Astrocyte of the cerebellum (primary cell): ENCODE measurements at regions of chr17 and their contacts with region 1.

Region 1: GRCh38 chr17:40303009-40303657 is 5.8 kb upstream of the RARA start:
- DNase-seq: peak; percentile 65
- H3K4me3 ChIP-seq: no peak overlapping the region
- CTCF ChIP-seq: peak; percentile 76

Region 2: DNA sequence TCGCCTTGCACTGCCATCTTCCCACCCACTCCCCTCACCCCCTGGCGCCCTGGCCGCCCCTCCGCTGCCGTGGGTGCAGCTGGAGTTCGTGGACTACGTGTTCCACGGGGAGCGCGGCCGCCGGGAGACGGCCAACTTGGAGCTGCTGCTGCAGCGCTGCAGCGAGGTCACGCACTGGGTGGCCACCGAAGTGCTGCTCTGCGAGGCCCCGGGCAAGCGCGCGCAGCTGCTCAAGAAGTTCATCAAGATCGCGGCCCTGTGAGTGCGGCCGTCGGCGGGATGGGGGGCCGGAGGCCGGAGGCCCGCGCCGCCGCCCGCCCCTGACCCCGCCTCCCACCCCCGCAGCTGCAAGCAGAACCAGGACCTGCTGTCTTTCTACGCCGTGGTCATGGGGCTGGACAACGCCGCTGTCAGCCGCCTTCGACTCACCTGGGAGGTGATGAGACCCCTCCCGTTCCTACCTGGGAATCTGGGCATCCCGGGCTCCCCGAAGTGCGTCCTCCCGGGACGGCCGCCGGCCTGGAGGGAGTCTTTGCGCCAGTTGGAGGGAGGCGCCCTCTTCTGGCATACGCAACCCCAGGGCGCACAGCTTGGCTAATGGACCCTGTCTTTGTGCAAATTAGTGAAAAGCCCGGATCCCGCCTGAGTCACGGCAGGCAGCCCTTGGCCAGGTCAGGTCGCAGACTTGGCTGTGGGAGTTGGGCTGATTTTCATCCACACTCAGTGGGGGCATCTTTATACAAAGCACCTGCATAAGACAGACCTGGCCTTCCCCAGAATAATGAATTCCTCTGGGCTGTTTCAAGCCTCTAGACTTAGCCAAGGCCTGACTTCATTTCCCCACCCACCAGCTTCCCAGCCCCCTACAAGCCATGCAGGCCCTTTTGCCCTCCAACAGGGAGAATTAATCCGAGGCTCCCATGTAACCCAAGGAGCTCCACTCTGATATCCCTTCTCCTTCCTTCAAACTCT is 111.6 kb before region 1 on chr17:
- in situ Hi-C with region 1: loop called (anchors 5 kb)
- DNase-seq: peak; percentile 42
- H3K4me3 ChIP-seq: peak overlapping the region; percentile 39
- CTCF ChIP-seq: peak; percentile 79

Region 3: DNA sequence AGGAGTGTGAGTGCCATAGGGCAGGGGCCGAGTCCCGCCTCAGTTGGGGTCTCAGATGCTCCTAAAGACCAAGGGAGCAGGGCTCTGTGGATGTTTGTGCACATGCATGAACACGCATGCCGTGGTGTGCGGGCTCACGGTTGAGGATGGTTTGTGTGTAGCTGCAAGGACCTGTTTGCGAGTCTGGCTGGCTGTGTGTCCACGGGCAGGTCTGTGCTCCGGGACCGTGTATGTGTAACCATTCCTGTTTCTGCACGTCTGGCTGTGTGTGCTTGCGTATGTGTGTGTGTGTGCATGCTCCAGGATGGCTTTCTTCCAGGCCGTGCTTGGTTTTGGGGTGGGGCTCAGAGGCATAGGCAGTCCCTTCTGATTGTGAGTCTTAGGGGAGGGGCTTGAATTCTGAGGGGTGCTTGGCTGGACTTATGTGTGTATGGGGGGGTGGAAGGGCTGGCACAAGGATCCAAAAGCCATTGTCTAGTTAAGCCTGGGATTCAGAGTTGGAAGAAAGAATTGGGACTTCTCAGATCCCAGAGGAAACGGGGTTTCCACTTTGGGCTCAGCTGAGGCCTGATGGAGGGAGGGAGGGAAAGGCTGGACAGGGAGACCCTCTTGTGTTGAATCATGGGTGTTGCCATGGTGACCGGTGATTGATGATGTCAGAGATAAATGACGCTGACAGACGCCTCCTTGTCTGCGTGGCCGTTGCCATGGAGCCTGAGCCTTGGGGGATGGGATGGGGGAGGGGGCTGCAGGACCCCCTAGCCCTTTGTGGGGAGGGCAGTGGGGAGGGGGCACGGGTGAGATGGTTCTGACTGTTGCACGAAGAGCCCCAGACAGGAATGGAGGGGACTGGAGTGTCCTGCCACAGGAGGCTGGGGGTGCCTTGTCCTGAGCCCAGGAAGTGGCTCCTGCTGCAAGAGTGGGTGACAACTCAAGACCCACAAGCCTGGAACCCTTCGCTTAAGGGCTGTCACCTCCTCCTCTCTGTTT is 47.1 kb after region 1 on chr17:
- in situ Hi-C with region 1: loop called (anchors 5 kb)
- DNase-seq: no peak
- H3K4me3 ChIP-seq: no peak overlapping the region
- CTCF ChIP-seq: no peak

Region 4: GRCh38 chr17:40417609-40418427 is 114.7 kb after region 1 on chr17 and contains the start of gene TOP2A:
- in situ Hi-C with region 1: loop called (anchors 5 kb)
- DNase-seq: peak; percentile 100
- H3K4me3 ChIP-seq: peak within 1 kb of the TSS; percentile 81
- CTCF ChIP-seq: no peak

Region 5: GRCh38 chr17:40516581-40517285 is 213.6 kb after region 1 on chr17:
- in situ Hi-C with region 1: no loop called
- DNase-seq: no peak
- H3K4me3 ChIP-seq: no peak overlapping the region
- CTCF ChIP-seq: no peak